ENCODE measurements at regions of chr20 and their contacts with region 1.

Region 1: DNA sequence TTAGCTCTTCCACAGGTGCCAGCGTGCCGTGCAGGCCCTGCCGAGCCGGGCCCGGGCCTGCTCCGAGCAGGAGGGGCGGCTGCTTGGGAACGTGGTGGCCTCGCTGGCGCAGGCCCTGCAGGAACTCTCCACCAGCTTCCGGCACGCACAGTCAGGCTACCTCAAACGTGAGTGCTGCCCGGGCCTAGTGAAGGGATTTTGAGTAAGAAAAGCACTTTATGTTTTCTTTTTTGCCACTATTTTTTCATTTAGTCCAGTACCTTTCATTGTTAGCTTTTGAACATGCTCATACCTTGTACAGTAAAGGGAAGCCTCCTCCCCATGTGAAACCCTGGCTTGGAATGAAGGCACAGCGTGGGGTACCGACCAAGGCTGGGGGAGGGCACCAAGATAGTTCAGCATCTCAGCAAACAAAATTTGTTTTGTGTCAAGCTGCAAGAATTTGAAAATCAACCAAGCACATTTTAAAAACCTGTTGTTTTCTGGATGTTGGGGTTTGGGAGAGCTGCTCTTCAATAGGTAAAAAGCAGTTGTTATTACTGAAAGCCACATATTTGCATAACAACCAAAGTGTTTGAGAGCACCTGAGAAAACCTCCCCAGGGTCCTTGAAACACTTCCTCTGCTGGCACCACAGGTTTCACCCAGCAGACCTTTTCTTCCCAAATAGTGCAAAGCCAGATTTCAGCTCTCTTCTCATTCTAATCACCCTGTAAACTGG is 18.4 kb downstream of the STX16 start:
- DNase-seq: peak; percentile 64 to 78
- H3K4me3 ChIP-seq: peak overlapping the region in 2 of 4 experiments; percentile 5 to 39; a peak in 2 of 8 replicates
- H3K27ac ChIP-seq: peak overlapping the region; percentile 94
- H3K4me1 ChIP-seq: peaks cover 16 to 34% (median 29%) of the 10 kb centered on the region in 4 experiments
- H3K27me3 ChIP-seq: no peaks in the 10 kb centered on the region
- CTCF ChIP-seq: no peak
- EP300 ChIP-seq: peak in 1 of 2 experiments; percentile 95; a peak in 1 of 3 replicates
- POLR2A ChIP-seq: peak in 1 of 2 experiments; percentile 72; a peak in 1 of 3 replicates
- RAD21 ChIP-seq: 0 out of 4 replicates have a peak, but pooled peaks of 1 of the 2 experiments have one; percentile 8

Region 2: DNA sequence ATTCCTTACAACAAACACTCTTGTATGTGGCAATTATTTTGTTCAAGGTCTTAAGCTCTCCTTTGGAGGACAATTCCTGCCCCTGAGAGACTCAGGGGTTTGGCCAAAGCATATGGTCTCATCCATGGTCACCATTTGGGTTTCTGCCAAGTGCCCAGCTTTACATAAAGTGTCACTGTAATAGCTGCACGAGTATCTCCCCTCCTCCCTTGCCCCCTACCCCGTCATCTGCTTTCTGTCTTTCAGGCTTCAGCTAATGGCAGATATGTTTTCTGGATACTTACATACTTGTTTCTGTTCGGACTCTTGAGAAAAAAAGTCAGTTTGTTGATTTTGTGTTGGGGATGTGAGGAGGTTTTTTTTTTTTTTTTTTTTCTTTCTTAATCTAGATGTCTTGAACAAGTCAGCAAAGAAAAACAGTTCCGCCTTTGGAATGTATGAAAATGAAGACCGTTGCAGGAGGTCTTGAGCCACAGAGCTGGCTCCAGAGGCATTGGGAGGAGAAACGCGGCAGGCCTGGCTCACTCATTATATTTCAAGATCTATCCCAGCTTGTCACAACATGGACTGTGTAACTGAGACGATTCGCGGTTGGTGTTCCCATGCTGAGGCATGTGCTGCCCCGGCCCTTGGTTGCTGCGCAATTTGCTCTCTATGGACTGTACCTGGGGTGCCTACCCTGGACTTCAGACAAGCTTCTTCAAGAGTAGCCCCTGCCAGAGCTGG is 50.9 kb before region 1 on chr20:
- CTCF ChIA-PET with region 1: interaction called, 3 read pairs
- POLR2A ChIA-PET with region 1: interaction called, 23 read pairs
- DNase-seq: no peak
- H3K4me3 ChIP-seq: no peak overlapping the region
- H3K27ac ChIP-seq: no peak overlapping the region
- H3K4me1 ChIP-seq: peaks cover 0 to 9% (median 5%) of the 10 kb centered on the region in 4 experiments; a peak in 5 of 7 replicates
- H3K27me3 ChIP-seq: peaks cover 0 to 13% (median 7%) of the 10 kb centered on the region in 4 experiments; a peak in 4 of 7 replicates
- CTCF ChIP-seq: no peak
- EP300 ChIP-seq: no peak
- POLR2A ChIP-seq: no peak
- RAD21 ChIP-seq: no peak

Region 3: GRCh38 chr20:58682662-58683531 is 13.4 kb after region 1 on chr20:
- CTCF ChIA-PET with region 1: interaction called, 3 read pairs
- POLR2A ChIA-PET with region 1: interaction called, 15 read pairs
- DNase-seq: peak in 1 of 2 experiments; percentile 24
- H3K4me3 ChIP-seq: no peak overlapping the region
- H3K27ac ChIP-seq: no peak overlapping the region
- H3K4me1 ChIP-seq: peaks cover 0 to 3% (median under 1%) of the 10 kb centered on the region in 4 experiments; a peak in 3 of 7 replicates
- H3K27me3 ChIP-seq: no peaks in the 10 kb centered on the region
- CTCF ChIP-seq: no peak
- EP300 ChIP-seq: no peak
- POLR2A ChIP-seq: no peak
- RAD21 ChIP-seq: no peak

Region 4: DNA sequence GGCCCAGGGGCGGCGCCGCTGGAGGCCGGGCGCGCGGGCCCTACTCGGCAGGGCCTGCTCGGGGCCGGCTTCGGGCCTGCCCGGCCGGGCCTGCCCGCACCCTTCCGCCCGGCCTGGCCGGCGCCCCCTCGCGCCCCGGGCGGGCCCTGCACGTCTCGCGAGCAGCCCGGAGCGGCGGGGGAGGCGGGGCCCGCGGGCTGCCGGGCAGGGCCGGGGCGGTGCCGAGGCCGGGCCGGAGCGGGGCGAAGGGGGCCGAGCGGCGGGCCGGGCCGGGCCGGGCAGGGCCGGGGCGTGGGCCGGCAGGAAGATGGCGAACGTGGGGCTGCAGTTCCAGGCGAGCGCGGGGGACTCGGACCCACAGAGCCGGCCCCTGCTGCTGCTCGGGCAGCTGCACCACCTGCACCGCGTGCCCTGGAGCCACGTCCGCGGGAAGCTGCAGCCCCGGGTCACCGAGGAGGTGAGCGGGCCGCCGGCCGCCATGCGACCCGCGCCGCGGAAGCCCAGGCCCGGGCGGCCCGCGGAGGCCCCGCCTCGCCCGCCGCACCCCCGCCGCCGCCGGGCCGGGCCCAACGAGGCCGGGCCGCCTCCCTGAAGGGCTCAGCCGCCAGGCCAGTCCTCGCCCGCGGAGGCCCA is 23.3 kb after region 1 on chr20 and contains the start of gene NPEPL1:
- CTCF ChIA-PET with region 1: interaction called, 8 read pairs
- POLR2A ChIA-PET with region 1: interaction called, 28 read pairs
- DNase-seq: peak in 1 of 2 experiments; percentile 70
- H3K4me3 ChIP-seq: peak within 1 kb of the TSS; percentile 21 to 56 (median 36)
- H3K27ac ChIP-seq: peak within 1 kb of the TSS; percentile 13; the same call in 1 of the 2 replicates
- H3K4me1 ChIP-seq: peaks cover 3 to 28% (median 17%) of the 10 kb centered on the region in 4 experiments
- H3K27me3 ChIP-seq: no peaks in the 10 kb centered on the region
- CTCF ChIP-seq: peak; percentile 19 to 47 (median 34); a peak in 3 of 4 replicates
- EP300 ChIP-seq: no peak
- POLR2A ChIP-seq: no peak
- RAD21 ChIP-seq: peak in 1 of 2 experiments; percentile 44; a peak in 1 of 4 replicates
- total RNA-seq, gene NPEPL1: 26.7 and 26.8 TPM in 2 replicates

Region 5: DNA sequence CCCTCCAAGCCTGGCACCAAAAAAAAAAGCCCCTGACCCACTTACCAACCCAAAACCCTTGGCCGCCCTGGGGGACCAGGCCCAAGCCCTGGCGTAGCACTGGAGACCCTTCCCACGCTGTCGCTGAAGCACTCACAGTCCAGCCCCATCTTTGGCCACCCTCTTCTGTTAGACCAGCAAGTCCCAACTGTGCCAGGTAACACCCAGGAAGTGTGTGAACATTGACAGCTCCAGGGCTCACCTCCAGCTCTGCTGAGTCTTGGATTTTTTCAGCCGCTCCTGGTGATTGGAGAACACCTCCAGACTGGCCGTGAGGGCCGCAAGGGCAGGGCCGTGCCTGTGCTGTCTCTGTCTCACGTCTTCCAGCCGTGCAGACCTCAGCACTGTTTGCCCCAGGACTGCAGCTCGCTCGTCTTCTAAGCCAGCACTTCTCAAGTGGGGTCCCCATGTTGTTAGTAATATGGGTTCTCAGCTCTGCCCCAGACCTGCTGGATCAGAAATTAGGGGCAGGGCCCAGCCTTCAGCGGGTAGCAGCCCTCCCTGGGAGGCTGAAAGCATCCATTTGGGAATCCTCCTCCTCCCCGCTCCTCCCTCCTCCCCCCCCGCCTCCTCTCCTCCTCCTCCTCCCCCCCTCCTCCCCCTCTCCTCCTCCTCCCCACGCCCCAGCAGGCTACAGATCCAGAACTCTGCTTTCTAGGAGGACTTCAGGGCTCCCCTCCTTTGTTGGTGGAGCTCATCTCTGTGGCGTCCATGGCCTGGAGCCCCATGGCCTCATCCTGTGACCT is 41.2 kb after region 1 on chr20:
- CTCF ChIA-PET with region 1: no interaction called
- POLR2A ChIA-PET with region 1: interaction called, 19 read pairs
- DNase-seq: peak in 1 of 2 experiments; percentile 43
- H3K4me3 ChIP-seq: no peak overlapping the region
- H3K27ac ChIP-seq: no peak overlapping the region
- H3K4me1 ChIP-seq: no peaks in the 10 kb centered on the region; a peak in 1 of 7 replicates
- H3K27me3 ChIP-seq: no peaks in the 10 kb centered on the region
- CTCF ChIP-seq: no peak
- EP300 ChIP-seq: no peak
- POLR2A ChIP-seq: no peak
- RAD21 ChIP-seq: no peak

Region 6: DNA sequence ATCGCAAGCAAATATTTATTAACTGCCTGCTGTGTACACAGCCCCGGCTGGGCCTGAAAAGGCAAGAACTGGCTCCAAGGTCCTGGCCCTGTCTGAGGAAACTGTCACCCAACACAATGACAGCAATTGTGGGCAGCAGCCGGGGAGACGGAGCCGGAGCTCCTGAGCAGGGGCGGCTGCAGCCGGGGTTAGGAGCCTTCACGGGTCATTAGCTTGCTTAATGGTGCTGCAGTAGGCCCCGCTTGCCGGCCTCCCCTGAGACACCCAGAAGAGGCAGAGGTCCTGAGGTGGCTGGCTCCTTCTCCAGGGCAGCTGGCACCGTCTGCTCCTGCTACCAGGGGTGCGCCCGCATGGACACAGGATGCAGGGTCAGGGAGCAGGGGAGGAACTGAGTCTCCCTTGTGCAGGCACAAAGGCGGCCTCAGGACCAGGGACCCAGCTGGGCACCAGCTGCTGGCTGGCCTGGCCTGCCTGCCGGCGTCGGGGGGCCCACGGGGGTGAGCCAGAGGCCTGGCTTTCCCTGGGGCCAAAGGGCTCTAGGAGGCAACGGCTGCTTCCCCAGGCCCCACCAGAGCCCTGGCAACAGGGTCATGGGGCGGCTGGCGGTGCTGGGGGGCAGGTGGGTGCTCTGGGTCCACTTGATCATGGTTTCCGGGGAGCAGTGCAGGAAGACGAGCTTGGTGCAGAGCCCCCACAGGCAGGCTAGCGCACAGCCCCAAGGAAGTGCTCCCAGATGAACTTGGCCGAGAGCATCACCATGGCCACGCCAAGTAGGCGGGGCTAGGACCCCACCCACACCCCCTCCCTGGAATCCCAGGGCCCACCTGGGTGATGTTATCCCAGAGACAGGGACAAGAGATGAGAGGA is 47.4 kb after region 1 on chr20:
- CTCF ChIA-PET with region 1: no interaction called
- POLR2A ChIA-PET with region 1: interaction called, 13 read pairs
- DNase-seq: peak in 1 of 2 experiments; percentile 46
- H3K4me3 ChIP-seq: no peak overlapping the region
- H3K27ac ChIP-seq: no peak overlapping the region
- H3K4me1 ChIP-seq: peaks cover 0 to 4% (median 0%) of the 10 kb centered on the region in 4 experiments; a peak in 2 of 7 replicates
- H3K27me3 ChIP-seq: no peaks in the 10 kb centered on the region
- CTCF ChIP-seq: no peak
- EP300 ChIP-seq: no peak
- POLR2A ChIP-seq: no peak
- RAD21 ChIP-seq: no peak

Region 7: DNA sequence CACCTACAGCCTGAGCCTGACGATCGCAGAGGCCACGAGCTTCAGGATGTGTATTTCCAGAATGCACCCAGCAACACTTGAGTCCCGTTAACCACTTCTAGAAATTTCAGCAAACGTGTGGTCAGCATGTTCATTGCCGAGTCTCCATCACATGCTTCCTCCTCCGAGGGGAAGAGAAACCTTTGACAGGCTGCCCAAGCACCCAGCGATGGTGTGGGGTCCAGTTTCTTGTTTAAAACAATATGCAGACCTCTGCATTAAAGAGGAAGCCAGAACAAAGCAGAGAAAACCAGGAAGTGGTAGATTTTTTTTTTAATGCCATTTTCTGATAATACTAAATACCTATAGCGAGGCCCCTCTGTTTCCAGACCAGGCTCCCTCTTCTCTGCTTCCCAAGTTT is 109.3 kb after region 1 on chr20:
- CTCF ChIA-PET with region 1: no interaction called
- POLR2A ChIA-PET with region 1: no interaction called
- DNase-seq: no peak
- H3K4me3 ChIP-seq: no peak overlapping the region
- H3K27ac ChIP-seq: no peak overlapping the region
- H3K4me1 ChIP-seq: peaks cover 0 to 4% (median 0%) of the 10 kb centered on the region in 4 experiments; a peak in 3 of 7 replicates
- H3K27me3 ChIP-seq: no peaks in the 10 kb centered on the region; a peak in 1 of 7 replicates
- CTCF ChIP-seq: no peak
- EP300 ChIP-seq: no peak
- POLR2A ChIP-seq: no peak
- RAD21 ChIP-seq: no peak